CD8-positive, alpha-beta T cell (primary cell): ENCODE measurements at regions of chr2 and their contacts with region 1.

Region 1: GRCh38 chr2:26345545-26346453 is at the start of gene SELENOI:
- DNase-seq: peak; percentile 98 to 100 (median 99)
- ATAC-seq: peak; percentile 92
- H3K4me3 ChIP-seq: peak within 1 kb of the TSS; percentile 85 to 86
- H3K4me3 Mint-ChIP-seq: peak within 1 kb of the TSS; percentile 98
- H3K27ac ChIP-seq: peak within 1 kb of the TSS; percentile 80 to 91
- H3K27ac Mint-ChIP-seq: peak within 1 kb of the TSS; percentile 100
- H3K4me1 ChIP-seq: peaks cover 28% of the 10 kb centered on the region
- H3K4me1 Mint-ChIP-seq: peaks cover 42% of the 10 kb centered on the region
- H3K27me3 ChIP-seq: no peaks in the 10 kb centered on the region
- H3K27me3 Mint-ChIP-seq: no peaks in the 10 kb centered on the region
- CTCF ChIP-seq: no peak
- total RNA-seq, gene SELENOI: 34.3 to 40.8 TPM

Region 2: DNA sequence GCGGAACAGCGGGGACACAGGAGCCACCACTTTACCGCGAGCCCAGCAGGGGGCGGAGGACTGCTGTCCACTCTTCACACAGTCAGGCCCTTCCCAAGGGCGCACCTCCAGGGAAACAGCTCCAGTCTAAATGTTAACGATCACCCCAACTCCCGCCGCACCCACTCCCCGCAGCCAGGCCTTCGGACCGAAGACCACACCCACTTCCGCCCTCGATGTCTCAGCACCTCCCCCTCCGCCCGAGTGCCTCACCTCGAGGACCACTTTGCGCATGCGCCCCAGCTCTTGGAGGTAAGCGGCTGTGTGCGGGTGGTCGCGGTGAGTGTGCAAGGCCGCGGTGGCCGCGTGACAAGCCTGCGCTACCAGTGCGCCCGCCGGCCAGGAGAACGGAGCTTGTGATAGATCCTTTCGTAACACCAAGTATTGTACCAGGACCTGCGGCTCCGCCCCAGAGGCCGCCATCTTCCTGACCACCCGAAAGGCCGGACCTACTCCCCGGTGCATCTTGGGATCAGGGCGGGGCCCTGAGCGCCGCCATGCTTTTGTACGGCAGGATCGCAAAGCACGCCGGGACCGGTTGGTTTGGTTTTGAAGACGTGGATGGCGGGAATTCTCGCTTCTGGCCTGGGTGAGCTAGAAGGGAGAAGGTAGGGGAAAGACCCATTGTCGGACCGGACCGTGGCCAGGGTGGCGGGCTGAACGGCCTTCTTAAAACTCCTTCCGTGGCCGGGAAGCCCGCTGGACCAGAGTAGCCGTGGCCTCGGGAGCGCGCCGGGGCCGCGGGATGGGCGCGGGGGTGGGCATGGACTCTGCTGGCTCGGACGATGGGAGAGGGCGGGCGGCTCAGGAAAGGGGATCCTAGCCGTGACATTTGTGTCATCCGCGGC is 1552.7 kb before region 1 on chr2 and contains the starts of genes CENPO and PTRHD1:
- CTCF ChIA-PET with region 1: no interaction called
- POLR2A ChIA-PET with region 1: no interaction called
- intact Hi-C with region 1: loop called in 1 of 2 experiments (anchors 5 kb)
- DNase-seq: peak; percentile 89 to 97 (median 94)
- ATAC-seq: peak; percentile 96
- H3K4me3 ChIP-seq: peak within 1 kb of the TSS; percentile 92 to 97
- H3K4me3 Mint-ChIP-seq: peak within 1 kb of the TSS; percentile 98
- H3K27ac ChIP-seq: peak within 1 kb of the TSS; percentile 90 to 98
- H3K27ac Mint-ChIP-seq: peak within 1 kb of the TSS; percentile 99
- H3K4me1 ChIP-seq: peaks cover 12% of the 10 kb centered on the region
- H3K4me1 Mint-ChIP-seq: peaks cover 18% of the 10 kb centered on the region
- H3K27me3 ChIP-seq: no peaks in the 10 kb centered on the region
- H3K27me3 Mint-ChIP-seq: no peaks in the 10 kb centered on the region
- CTCF ChIP-seq: peak; percentile 68
- total RNA-seq, gene CENPO: 3.4 to 3.6 TPM
- total RNA-seq, gene PTRHD1: 12.2 to 19.0 TPM

Region 3: DNA sequence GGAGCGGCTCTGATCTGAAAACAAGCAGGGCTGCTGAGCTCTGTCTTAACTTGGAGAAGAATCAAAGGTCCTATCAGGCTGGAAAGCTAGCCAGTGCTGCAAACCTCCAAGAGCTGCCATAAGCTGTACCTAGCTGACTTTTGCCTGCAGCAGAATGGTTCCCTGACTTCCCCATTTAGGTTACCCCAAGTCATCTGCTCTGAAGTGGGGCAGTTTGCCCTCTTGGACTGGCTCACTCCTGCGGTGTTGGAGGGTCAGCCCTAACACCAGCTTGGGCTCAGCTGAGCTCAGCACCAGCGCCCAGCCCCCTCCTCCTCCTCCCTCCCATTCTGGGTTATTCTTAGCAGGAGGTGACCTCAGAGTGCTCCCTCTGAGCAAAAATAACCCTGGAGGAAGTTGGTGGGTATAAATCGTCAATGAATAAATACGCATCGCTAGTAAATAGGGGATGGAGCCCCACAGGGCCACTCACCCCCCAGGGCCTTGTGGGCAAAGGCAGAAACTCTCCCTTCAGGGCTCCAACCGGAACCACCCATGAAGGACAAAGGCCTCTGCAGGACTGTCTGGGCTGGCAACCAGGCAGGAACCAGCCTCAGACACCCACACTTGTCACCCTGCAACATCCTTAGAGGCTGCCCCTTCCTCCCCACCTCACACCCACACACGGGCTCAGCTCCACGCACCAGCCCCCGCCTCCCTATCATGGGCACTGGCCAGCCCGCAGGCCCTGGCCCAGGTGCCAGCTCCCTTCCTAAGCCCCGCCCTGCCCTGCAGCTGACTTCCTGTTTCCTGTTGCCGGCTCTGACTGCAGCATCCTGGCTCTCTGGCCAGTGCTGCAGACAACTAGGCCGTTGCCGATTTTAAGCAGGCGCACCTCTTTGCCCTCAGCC is 1051.0 kb before region 1 on chr2:
- CTCF ChIA-PET with region 1: no interaction called
- POLR2A ChIA-PET with region 1: no interaction called
- intact Hi-C with region 1: loop called in 1 of 2 experiments (anchors 10 kb)
- DNase-seq: peak; percentile 49 to 91 (median 85)
- ATAC-seq: peak; percentile 81
- H3K4me3 ChIP-seq: peak overlapping the region; percentile 18 to 46
- H3K4me3 Mint-ChIP-seq: peak overlapping the region; percentile 79
- H3K27ac ChIP-seq: peak overlapping the region; percentile 70 to 80
- H3K27ac Mint-ChIP-seq: peak overlapping the region; percentile 97
- H3K4me1 ChIP-seq: peaks cover 72% of the 10 kb centered on the region
- H3K4me1 Mint-ChIP-seq: peaks cover 59% of the 10 kb centered on the region
- H3K27me3 ChIP-seq: no peaks in the 10 kb centered on the region
- H3K27me3 Mint-ChIP-seq: no peaks in the 10 kb centered on the region
- CTCF ChIP-seq: no peak

Region 4: GRCh38 chr2:25982273-25982967 is 363.4 kb before region 1 on chr2 and contains the start of gene KIF3C:
- CTCF ChIA-PET with region 1: no interaction called
- POLR2A ChIA-PET with region 1: no interaction called
- intact Hi-C with region 1: loop called (anchors 5 kb)
- DNase-seq: peak; percentile 46 to 84 (median 76)
- ATAC-seq: peak; percentile 92
- H3K4me3 ChIP-seq: peak within 1 kb of the TSS; percentile 61 to 81
- H3K4me3 Mint-ChIP-seq: peak within 1 kb of the TSS; percentile 88
- H3K27ac ChIP-seq: peak within 1 kb of the TSS; percentile 26 to 28
- H3K27ac Mint-ChIP-seq: peak within 1 kb of the TSS; percentile 79
- H3K4me1 ChIP-seq: peaks cover 11% of the 10 kb centered on the region
- H3K4me1 Mint-ChIP-seq: peaks cover 17% of the 10 kb centered on the region
- H3K27me3 ChIP-seq: no peaks in the 10 kb centered on the region
- H3K27me3 Mint-ChIP-seq: no peaks in the 10 kb centered on the region
- CTCF ChIP-seq: no peak
- total RNA-seq, gene KIF3C: 1.5 to 2.3 TPM

Region 5: DNA sequence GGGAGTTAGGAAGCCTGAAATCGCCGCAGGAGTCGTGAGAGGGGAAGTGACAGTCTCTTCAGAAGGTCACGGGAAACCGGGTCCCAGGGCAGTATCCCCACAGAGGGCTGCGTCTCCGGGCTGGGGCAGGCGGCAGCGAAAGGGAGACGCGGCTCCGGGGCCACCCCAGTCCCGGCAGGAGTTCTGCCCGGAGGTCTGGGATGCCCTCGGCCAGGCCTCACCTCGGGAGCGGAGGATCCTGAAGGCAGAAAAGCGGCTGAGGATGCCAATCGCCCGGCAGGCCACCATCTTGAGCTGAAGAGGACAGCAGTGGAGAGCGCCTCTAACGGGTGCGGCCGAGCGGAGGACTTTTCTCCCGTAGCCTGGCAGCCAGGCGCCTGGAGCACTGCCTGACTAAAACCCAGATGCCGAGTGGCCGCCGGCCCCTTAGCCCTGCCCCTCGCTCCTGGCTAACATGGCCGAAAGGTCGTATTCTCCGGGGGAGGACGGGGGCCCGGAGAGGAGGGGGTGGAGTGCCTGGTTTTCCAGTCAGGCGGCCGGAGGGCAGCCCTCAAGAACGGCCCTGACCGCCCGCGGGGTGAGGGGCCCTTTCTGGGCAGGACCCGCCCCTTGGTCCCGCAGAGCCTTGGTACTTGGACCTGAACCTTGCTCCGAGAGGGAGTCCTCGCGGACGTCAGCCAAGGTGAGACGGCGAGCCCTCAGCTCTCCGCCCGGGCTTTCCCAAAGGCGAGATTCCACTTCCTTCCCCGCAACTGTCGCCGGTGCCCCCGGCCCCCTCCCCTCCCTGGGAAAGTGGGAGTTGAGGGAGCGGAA is 101.3 kb before region 1 on chr2 and contains the starts of genes HADHA and HADHB:
- CTCF ChIA-PET with region 1: interaction called, 4 read pairs
- POLR2A ChIA-PET with region 1: interaction called, 10 read pairs
- intact Hi-C with region 1: loop called (anchors 1 kb)
- DNase-seq: peak; percentile 72 to 91 (median 84)
- ATAC-seq: peak; percentile 82
- H3K4me3 ChIP-seq: peak within 1 kb of the TSS; percentile 99
- H3K4me3 Mint-ChIP-seq: peak within 1 kb of the TSS; percentile 99
- H3K27ac ChIP-seq: peak within 1 kb of the TSS; percentile 99
- H3K27ac Mint-ChIP-seq: peak within 1 kb of the TSS; percentile 100
- H3K4me1 ChIP-seq: peaks cover 22% of the 10 kb centered on the region
- H3K4me1 Mint-ChIP-seq: peaks cover 60% of the 10 kb centered on the region
- H3K27me3 ChIP-seq: no peaks in the 10 kb centered on the region
- H3K27me3 Mint-ChIP-seq: no peaks in the 10 kb centered on the region
- CTCF ChIP-seq: no peak
- total RNA-seq, gene HADHA: 66.8 to 69.4 TPM
- total RNA-seq, gene HADHB: 26.0 to 26.1 TPM

Region 6: DNA sequence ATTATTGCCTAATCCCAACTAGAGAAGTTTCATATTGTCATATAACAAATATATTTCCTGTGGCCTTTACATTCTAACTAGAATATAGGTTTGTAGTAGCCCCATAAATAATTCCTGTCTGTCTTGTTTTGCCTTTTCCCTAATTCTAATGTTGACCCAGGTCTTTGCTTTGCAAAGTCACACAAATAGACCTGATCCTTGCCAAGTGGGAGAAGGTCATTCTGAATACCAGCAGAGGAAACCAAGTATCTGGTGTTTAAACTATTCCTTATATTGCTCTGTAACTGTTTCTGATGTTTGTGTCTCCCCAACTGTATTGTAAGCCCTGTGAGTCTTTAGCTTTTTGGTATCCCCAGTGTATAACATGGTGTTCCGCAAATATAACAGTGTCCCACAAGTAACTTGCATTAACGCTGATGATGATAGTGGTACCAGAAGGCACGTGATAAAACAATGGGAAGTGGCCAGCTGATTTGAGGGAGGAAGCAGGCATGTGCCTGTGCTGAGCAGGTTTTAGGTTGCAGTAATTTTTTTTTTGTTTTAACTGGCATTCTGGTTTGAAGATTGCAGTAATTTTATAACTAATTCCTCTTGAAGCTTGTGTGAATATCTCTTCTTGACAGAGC is 89.9 kb before region 1 on chr2:
- CTCF ChIA-PET with region 1: no interaction called
- POLR2A ChIA-PET with region 1: no interaction called
- intact Hi-C with region 1: no loop called
- DNase-seq: no peak
- ATAC-seq: no peak
- H3K4me3 ChIP-seq: no peak overlapping the region
- H3K4me3 Mint-ChIP-seq: no peak overlapping the region
- H3K27ac ChIP-seq: no peak overlapping the region
- H3K27ac Mint-ChIP-seq: no peak overlapping the region
- H3K4me1 ChIP-seq: no peaks in the 10 kb centered on the region
- H3K4me1 Mint-ChIP-seq: peaks cover 23% of the 10 kb centered on the region
- H3K27me3 ChIP-seq: no peaks in the 10 kb centered on the region
- H3K27me3 Mint-ChIP-seq: no peaks in the 10 kb centered on the region
- CTCF ChIP-seq: no peak

Region 7: GRCh38 chr2:26764078-26764887 is 418.5 kb after region 1 on chr2 and contains the start of gene SLC35F6:
- CTCF ChIA-PET with region 1: no interaction called
- POLR2A ChIA-PET with region 1: no interaction called
- intact Hi-C with region 1: loop called in 1 of 2 experiments (anchors 5 kb)
- DNase-seq: peak; percentile 61 to 92 (median 83)
- ATAC-seq: peak; percentile 94
- H3K4me3 ChIP-seq: peak within 1 kb of the TSS; percentile 95 to 100
- H3K4me3 Mint-ChIP-seq: peak within 1 kb of the TSS; percentile 94
- H3K27ac ChIP-seq: peak within 1 kb of the TSS; percentile 90 to 91
- H3K27ac Mint-ChIP-seq: peak within 1 kb of the TSS; percentile 96
- H3K4me1 ChIP-seq: peaks cover 26% of the 10 kb centered on the region
- H3K4me1 Mint-ChIP-seq: peaks cover 46% of the 10 kb centered on the region
- H3K27me3 ChIP-seq: no peaks in the 10 kb centered on the region
- H3K27me3 Mint-ChIP-seq: no peaks in the 10 kb centered on the region
- CTCF ChIP-seq: no peak
- total RNA-seq, gene SLC35F6: 30.4 to 30.7 TPM

Region 8: DNA sequence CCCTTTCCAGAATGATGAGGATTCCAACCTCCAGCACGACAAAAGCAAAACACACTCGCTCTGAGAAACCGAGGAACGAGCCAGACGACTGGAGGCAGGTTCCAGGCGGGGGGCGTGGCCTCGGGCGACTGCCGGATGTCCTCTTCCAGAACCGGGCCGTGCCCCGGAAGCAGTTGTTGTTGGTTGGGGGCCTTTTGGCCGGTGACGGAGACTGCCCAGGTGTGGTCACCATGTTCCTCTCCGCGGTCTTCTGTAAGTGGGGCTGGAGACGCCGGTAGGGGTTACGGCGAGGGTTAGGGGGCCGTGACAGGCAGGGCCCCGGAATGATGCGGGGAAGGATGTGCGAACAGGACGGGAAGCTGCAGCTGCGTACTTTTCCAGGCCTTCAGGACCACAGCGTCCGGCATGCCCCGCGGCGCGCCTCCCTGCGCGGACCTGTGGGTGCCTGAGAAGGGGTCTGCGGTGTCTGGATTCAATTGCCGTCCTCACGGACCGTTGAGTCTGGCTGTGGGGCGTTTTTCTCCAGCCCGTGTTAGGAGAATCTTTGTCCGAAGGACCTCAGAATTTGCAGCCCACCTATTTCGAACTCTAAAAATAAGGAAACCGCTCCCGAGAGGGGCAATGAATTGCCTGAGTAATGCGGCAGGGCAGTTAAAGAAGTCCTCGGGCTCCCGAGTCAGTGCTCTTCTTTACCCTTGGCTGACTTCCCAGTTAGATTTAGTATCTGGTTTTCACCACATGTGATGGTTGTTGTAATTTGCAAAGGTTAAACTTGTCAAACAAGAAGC is 1425.9 kb after region 1 on chr2 and contains the start of gene MRPL33:
- CTCF ChIA-PET with region 1: no interaction called
- POLR2A ChIA-PET with region 1: no interaction called
- intact Hi-C with region 1: loop called in 1 of 2 experiments (anchors 10 kb)
- DNase-seq: peak; percentile 82 to 94 (median 92)
- ATAC-seq: peak; percentile 89
- H3K4me3 ChIP-seq: peak within 1 kb of the TSS; percentile 93 to 99
- H3K4me3 Mint-ChIP-seq: peak within 1 kb of the TSS; percentile 100
- H3K27ac ChIP-seq: peak within 1 kb of the TSS; percentile 93 to 96
- H3K27ac Mint-ChIP-seq: peak within 1 kb of the TSS; percentile 100
- H3K4me1 ChIP-seq: peaks cover 27% of the 10 kb centered on the region
- H3K4me1 Mint-ChIP-seq: peaks cover 51% of the 10 kb centered on the region
- H3K27me3 ChIP-seq: no peaks in the 10 kb centered on the region
- H3K27me3 Mint-ChIP-seq: peaks cover 4% of the 10 kb centered on the region
- CTCF ChIP-seq: no peak
- total RNA-seq, gene MRPL33: 35.8 to 39.0 TPM